OCI-LY7 (cell line): ENCODE measurements at regions of chr5 and their contacts with region 1.

Region 1: GRCh38 chr5:156981481-156981880 is 18.5 kb upstream of the TIMD4 start:
- DNase-seq: peak; percentile 61
- H3K4me3 ChIP-seq: peak overlapping the region; percentile 49
- H3K27ac ChIP-seq: peak overlapping the region; percentile 95
- H3K4me1 ChIP-seq: peaks cover 69% of the 10 kb centered on the region
- CTCF ChIP-seq: no peak

Region 2: DNA sequence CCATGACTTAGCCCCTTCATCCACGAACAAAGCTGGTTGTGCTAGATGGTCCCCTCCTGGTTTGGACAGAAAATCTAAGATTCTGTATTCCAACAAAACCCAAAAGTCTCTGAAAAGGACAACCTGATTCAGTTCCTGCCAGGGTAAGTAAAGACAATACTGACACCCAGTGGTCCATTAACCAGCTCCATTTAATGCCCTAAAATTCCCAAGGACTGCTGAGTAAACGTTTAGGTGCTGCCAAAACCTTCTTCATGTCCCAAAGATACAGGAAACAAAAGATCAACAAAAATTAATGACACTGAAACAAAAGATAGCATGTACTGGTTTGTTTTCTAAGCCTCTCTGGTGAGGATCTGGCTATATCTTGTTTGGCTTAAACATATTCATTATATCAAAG is 156.7 kb before region 1 on chr5:
- CTCF ChIA-PET with region 1: no interaction called
- POLR2A ChIA-PET with region 1: interaction called, 3 read pairs
- intact Hi-C with region 1: loop called (anchors 2 kb)
- DNase-seq: peak; percentile 67
- H3K4me3 ChIP-seq: peak overlapping the region; percentile 48
- H3K27ac ChIP-seq: peak overlapping the region; percentile 77
- H3K4me1 ChIP-seq: peaks cover 89% of the 10 kb centered on the region
- CTCF ChIP-seq: peak; percentile 83

Region 3: DNA sequence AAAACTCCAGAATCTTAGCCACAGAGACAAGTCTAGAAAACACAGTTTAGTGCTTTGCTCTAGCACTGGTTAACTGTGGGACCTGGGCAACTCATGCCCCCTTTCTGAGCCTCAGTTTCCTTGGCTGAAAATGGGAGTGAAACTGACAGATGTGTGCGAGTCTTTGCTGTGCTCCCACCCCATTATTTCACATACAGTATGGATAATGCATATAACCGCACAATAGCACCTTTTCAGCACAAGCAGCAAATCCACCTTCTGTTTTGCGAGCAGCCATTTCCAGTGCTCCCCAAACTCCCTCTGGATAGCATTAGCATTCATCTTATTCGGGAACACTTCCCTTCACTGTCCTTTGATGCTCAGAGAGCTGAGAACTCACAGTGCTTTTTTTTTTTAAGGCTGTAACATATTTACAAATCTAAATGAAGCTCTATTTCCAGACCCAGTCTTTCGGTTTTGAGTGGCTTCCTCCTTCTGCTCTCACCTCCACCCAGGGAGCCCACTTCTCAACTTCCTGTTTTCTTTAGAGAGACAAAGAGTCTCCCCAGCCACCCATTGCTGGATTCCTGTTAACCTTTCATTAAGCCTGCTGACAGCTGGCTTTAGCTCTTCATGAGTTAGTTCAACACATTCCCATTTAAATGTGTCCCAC is 67.6 kb before region 1 on chr5:
- CTCF ChIA-PET with region 1: no interaction called
- POLR2A ChIA-PET with region 1: interaction called, 21 read pairs
- intact Hi-C with region 1: no loop called
- DNase-seq: peak; percentile 92
- H3K4me3 ChIP-seq: peak overlapping the region; percentile 51
- H3K27ac ChIP-seq: peak overlapping the region; percentile 95
- H3K4me1 ChIP-seq: peaks cover 95% of the 10 kb centered on the region
- CTCF ChIP-seq: no peak

Region 4: GRCh38 chr5:156942064-156942463 is 39.4 kb before region 1 on chr5:
- CTCF ChIA-PET with region 1: no interaction called
- POLR2A ChIA-PET with region 1: interaction called, 70 read pairs
- intact Hi-C with region 1: no loop called
- DNase-seq: peak; percentile 76
- H3K4me3 ChIP-seq: peak overlapping the region; percentile 18
- H3K27ac ChIP-seq: peak overlapping the region; percentile 70
- H3K4me1 ChIP-seq: peaks cover 37% of the 10 kb centered on the region
- CTCF ChIP-seq: no peak

Region 5: DNA sequence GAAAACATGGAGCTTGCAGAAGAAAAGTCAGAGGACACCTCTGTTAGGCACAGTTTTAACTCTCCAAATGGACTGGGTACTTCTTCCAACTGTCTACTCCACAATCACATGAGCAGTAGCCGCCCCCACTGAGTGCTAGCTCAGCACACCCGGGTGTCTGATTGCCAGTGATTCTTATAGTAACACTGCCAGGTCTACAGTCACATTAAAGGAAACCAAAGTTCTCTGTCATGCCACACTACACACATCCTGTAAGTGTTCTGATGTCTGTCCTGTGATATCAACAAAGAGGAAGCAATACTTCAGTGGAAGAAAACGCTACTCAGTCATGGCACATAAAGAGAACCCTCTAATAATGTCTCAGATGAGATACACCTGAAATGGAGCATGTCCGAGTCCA is 127.5 kb after region 1 on chr5 and contains the start of gene HAVCR2:
- CTCF ChIA-PET with region 1: no interaction called
- POLR2A ChIA-PET with region 1: no interaction called
- intact Hi-C with region 1: loop called (anchors 2 kb)
- DNase-seq: peak; percentile 85
- H3K4me3 ChIP-seq: peak within 1 kb of the TSS; percentile 63
- H3K27ac ChIP-seq: peak within 1 kb of the TSS; percentile 82
- H3K4me1 ChIP-seq: peaks cover 42% of the 10 kb centered on the region
- CTCF ChIP-seq: no peak
- total RNA-seq, gene HAVCR2: 4.2 and 7.4 TPM in 2 replicates

Region 6: GRCh38 chr5:157271740-157272271 is 290.3 kb after region 1 on chr5:
- CTCF ChIA-PET with region 1: no interaction called
- POLR2A ChIA-PET with region 1: interaction called, 4 read pairs
- intact Hi-C with region 1: loop called (anchors 2 kb)
- DNase-seq: peak; percentile 98
- H3K4me3 ChIP-seq: peak overlapping the region; percentile 82
- H3K27ac ChIP-seq: peak overlapping the region; percentile 98
- H3K4me1 ChIP-seq: peaks cover 93% of the 10 kb centered on the region
- CTCF ChIP-seq: no peak

Region 7: DNA sequence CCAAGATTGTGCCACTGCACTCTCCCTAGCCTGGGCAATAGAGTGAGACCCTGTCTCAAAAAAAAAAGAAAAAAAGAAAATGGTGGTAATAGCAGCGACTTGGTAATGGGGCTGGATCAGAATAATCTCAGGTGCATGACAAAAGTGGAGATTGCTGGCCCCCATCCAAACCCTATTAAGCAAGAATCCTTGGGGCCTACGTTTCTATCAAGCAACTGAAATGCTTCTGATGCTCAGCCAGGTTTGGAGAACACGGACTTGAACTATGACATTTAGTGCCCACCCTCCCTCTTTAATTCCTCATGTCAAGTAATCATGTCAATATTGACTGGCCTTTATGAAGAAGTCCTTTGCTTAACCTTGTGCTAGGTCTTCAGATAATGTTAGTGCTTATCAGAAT is 696.5 kb after region 1 on chr5:
- CTCF ChIA-PET with region 1: no interaction called
- POLR2A ChIA-PET with region 1: no interaction called
- intact Hi-C with region 1: no loop called
- DNase-seq: no peak
- H3K4me3 ChIP-seq: no peak overlapping the region
- H3K27ac ChIP-seq: no peak overlapping the region
- H3K4me1 ChIP-seq: no peaks in the 10 kb centered on the region
- CTCF ChIP-seq: no peak